Posterior vena cava (tissue), 2 donors: ENCODE measurements at regions of chr1 and their contacts with region 1.

Region 1: DNA sequence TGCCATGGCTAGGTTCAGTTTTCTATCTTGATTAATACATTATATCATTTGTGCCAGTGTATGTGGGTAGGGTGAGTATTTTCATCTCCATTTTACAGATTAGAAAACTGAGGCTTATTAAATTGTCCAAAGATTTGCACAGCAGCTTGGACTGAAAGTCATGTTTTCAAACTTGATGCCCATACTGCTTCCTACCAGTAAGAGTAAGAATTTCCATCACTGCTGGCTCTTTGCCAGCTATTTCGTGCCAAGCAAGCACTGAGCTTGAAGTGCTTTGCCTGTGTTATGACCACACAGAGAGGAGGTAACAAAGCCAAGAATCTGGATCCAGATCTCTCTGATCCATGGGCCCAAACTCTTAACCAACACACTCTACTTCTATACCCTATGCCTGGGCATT is 295.0 kb downstream of the VAV3 start:
- DNase-seq: no peak

Region 2: GRCh38 chr1:107142140-107142542 is 527.9 kb before region 1 on chr1:
- intact Hi-C with region 1: loop called in 1 of 2 experiments (anchors 5 kb)
- DNase-seq: no peak

Region 3: DNA sequence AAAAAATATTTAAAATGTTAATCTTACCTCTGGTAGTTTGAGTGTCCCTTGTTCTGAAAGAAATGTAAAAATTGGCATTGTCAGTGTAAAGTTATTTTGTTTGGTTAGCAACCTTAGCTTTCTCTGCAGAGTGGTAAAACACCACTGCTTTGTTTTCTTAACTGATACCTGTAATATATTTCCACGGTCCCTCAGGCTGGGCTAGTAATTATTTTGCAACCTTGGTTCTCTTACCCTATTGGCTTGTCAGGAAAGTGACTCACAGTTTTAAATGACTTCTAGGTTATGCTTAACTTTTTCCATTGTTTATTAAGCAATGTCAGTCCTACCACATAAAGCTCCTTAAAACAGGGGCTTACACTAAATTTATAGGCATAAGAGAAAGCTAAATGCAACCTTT is 18.4 kb after region 1 on chr1:
- intact Hi-C with region 1: no loop called
- DNase-seq: no peak